Activated CD8-positive, alpha-beta T cell treated with anti-CD3 and anti-CD28 coated beads, Interleukin-2, amount 10 ng/mL, durations not matched to agents 7 days and 5 days (primary cell): ENCODE measurements at regions of chr17 and their contacts with region 1.

Region 1: DNA sequence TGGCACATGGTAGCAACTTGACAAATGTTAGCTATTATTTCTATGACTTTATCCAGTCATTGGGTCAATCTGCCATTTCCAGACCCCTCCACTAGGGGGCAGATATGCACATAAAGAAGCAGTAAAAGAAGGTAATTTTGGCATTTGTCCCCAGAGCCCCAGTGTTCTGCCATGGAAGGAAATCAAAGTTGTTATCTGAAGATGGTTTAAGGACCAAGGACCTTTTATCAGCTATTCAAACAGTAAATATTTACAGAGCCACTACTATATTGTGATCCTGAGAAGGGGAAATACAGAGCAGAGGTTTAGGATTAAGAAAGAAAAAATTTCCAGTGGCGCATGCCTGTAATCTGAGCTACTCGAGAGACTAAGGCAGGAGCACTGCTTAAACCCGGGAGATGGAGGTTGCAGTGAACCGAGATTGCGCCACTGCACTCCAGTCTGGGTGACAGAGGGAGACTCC is 20.0 kb downstream of the TRAF4 start:
- DNase-seq: peak; percentile 87
- ATAC-seq: peak; percentile 78
- H3K4me3 Mint-ChIP-seq: no peak overlapping the region
- H3K27ac Mint-ChIP-seq: no peak overlapping the region
- H3K4me1 Mint-ChIP-seq: peaks cover 16% of the 10 kb centered on the region
- H3K27me3 Mint-ChIP-seq: no peaks in the 10 kb centered on the region

Region 2: DNA sequence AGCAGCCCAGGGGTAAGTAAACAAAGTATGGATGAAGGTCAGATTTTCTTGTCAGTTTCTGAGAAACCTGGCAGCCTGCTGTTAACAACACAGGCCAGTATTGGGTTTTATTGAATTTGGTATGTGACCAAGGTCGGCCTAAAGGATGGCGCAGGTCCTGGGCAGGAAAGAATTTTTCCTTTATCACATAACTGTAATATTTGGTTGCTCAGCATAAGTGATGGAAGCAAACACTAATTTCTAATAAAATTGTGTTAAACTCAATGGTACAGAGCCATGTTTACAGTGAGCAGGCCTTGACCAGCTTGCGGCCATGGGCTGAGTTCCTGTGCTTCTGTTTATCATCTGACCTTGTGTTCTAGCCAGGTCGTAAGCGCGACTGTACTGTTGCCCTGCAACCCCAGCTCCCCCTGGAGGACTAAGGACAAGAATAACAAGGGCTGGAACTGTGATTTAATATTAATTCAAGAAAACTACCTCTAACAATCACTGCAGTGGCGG is 417.0 kb before region 1 on chr17:
- CTCF ChIA-PET with region 1: no interaction called
- POLR2A ChIA-PET with region 1: no interaction called
- DNase-seq: no peak
- ATAC-seq: no peak
- H3K4me3 Mint-ChIP-seq: no peak overlapping the region
- H3K27ac Mint-ChIP-seq: no peak overlapping the region
- H3K4me1 Mint-ChIP-seq: peaks cover 5% of the 10 kb centered on the region
- H3K27me3 Mint-ChIP-seq: no peaks in the 10 kb centered on the region

Region 3: DNA sequence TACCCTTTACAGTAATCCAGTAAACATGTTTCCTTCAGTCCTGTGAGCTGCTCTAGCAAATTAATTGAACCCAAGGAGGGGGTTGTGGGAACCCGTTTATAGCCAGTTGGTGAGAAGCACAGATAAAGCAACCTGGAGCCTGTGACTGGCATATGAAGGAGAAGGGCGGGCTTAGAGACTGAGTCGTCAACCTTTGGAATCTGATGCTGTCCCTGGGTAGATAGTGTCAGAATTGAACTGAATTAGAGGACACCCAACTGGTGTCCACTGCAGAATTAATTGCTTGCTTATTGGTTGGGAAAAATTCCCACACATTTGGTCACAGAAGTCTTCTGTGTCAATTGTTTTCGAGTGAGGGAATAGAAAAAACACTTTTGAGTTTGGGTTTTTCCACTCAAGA is 137.0 kb before region 1 on chr17:
- CTCF ChIA-PET with region 1: no interaction called
- POLR2A ChIA-PET with region 1: no interaction called
- DNase-seq: no peak
- ATAC-seq: no peak
- H3K4me3 Mint-ChIP-seq: no peak overlapping the region
- H3K27ac Mint-ChIP-seq: no peak overlapping the region
- H3K4me1 Mint-ChIP-seq: no peaks in the 10 kb centered on the region
- H3K27me3 Mint-ChIP-seq: no peaks in the 10 kb centered on the region

Region 4: DNA sequence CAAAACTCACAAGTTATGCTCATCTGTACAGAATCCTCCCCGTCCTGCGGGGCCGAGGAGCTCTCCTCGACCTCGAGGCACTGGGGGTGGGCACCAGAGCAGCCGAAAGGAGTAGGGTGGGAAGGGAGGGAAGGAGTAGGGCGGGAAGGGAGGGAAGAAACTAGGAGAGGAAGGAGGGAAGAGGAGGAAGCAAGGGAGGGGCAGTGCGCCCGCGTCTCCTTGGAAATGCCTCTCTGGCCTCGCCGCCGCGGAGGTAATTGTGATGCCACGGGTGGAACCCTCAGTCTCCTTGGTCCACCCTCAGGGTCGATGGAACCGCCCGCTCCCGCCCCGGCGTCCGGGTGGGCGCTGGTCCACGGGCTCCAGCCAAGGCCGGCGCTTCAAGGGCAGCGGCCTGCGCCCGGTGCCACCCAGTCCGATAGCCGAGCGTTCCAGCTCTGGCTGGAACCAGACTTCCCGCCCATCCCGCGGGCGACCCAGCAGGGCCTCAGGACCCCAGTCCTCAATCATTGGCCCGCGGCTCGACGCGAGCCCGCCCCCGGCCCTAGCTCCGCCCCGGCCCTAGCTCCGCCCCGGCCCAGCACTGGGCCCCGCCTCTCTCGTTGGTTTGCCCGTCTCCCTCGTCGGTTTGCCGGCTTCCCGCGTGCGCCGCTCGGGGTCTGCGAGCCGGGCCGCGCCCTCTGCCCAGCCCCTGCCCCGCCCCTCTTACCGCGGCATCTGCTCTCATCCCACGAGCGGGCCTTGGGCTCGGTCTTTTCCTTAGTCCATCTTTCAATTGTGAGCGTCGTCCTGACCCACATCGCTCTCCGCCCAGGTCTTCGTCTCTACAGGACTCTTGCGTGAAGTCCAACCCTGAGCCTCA is 52.7 kb before region 1 on chr17:
- CTCF ChIA-PET with region 1: interaction called, 13 read pairs
- POLR2A ChIA-PET with region 1: no interaction called
- DNase-seq: peak; percentile 91
- ATAC-seq: peak; percentile 91
- H3K4me3 Mint-ChIP-seq: peak overlapping the region; percentile 86
- H3K27ac Mint-ChIP-seq: peak overlapping the region; percentile 98
- H3K4me1 Mint-ChIP-seq: peaks cover 20% of the 10 kb centered on the region
- H3K27me3 Mint-ChIP-seq: peaks cover 9% of the 10 kb centered on the region

Region 5: GRCh38 chr17:28777178-28777577 is 13.3 kb after region 1 on chr17:
- CTCF ChIA-PET with region 1: interaction called, 83 read pairs
- POLR2A ChIA-PET with region 1: no interaction called
- DNase-seq: no peak
- ATAC-seq: no peak
- H3K4me3 Mint-ChIP-seq: no peak overlapping the region
- H3K27ac Mint-ChIP-seq: peak overlapping the region; percentile 34
- H3K4me1 Mint-ChIP-seq: peaks cover 28% of the 10 kb centered on the region
- H3K27me3 Mint-ChIP-seq: no peaks in the 10 kb centered on the region

Region 6: DNA sequence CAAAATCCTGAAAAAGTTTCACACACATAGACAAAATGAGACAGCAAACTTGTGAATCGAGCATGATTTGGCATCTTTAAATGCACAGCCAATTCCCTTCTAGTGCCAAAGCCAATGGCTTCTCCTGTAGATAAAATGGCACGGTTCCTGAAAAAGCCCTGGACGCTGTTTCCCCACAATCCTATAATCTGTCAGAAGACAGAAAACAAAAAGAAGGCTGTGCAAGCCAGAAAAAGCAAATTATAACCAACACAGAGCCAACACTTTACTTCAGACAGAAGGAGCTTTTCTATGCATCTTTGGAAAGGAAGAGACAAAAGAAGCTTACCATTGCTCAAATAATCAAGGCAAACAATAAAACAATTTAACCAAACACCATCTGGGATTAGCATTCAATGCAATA is 55.0 kb after region 1 on chr17:
- CTCF ChIA-PET with region 1: interaction called, 21 read pairs
- POLR2A ChIA-PET with region 1: no interaction called
- DNase-seq: no peak
- ATAC-seq: no peak
- H3K4me3 Mint-ChIP-seq: no peak overlapping the region
- H3K27ac Mint-ChIP-seq: no peak overlapping the region
- H3K4me1 Mint-ChIP-seq: peaks cover 12% of the 10 kb centered on the region
- H3K27me3 Mint-ChIP-seq: no peaks in the 10 kb centered on the region

Region 7: DNA sequence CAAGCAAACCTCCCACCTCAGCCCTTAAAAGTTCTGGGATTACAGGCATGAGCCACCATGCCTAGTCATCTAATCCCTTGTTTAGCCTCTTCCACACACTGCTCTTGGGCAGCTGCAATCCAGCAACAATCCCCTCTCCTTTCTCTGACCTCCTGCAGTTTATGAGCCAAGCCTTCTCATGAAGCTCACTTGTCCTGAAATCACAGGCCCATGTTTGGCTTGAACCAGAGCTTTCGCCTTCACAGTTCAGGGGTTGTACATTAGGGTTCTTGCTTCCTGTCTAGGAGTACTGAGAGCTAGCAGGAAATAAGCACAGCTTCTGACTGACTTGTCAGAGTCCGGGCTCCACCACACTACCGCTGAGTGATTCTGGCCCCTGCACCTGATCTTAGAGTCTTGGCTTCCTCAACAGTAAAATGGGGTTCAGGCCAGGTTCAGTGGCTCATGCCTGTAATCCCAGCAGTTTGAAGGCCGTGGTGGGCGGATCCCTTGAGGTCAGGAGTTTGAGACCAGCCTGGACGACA is 107.3 kb after region 1 on chr17:
- CTCF ChIA-PET with region 1: interaction called, 32 read pairs
- POLR2A ChIA-PET with region 1: interaction called, 4 read pairs
- DNase-seq: peak; percentile 76
- ATAC-seq: peak; percentile 99
- H3K4me3 Mint-ChIP-seq: no peak overlapping the region
- H3K27ac Mint-ChIP-seq: peak overlapping the region; percentile 97
- H3K4me1 Mint-ChIP-seq: peaks cover 16% of the 10 kb centered on the region
- H3K27me3 Mint-ChIP-seq: no peaks in the 10 kb centered on the region

Region 8: DNA sequence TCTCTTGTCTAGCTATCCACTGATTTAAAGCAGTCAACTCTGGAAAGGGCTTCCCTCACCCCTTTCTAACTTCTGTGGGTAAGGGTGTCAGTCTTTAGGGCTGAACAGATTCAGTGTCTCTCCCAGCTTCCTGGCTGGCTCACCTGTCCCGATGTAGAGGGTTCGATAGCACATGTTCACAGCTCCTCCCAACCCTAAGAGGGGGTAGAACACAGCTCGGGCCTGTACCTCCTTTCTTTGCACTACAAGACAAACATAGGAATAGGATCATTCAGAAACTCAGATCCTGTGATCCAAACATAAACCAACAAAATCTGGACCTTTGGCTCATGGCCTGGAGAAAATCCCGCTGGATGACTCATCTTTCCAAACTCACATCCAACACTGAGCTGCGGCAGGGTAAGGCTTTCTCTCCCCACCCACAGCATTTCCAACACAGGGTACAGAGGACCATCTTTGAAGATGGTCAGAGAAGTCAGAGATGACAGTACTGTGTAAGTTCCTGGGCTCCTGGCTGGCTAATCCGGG is 144.9 kb after region 1 on chr17:
- CTCF ChIA-PET with region 1: interaction called, 44 read pairs
- POLR2A ChIA-PET with region 1: no interaction called
- DNase-seq: no peak
- ATAC-seq: no peak
- H3K4me3 Mint-ChIP-seq: no peak overlapping the region
- H3K27ac Mint-ChIP-seq: no peak overlapping the region
- H3K4me1 Mint-ChIP-seq: no peaks in the 10 kb centered on the region
- H3K27me3 Mint-ChIP-seq: no peaks in the 10 kb centered on the region

Region 9: GRCh38 chr17:28951991-28952975 is 188.4 kb after region 1 on chr17:
- CTCF ChIA-PET with region 1: interaction called, 54 read pairs
- POLR2A ChIA-PET with region 1: no interaction called
- DNase-seq: peak; percentile 98
- ATAC-seq: peak; percentile 76
- H3K4me3 Mint-ChIP-seq: no peak overlapping the region
- H3K27ac Mint-ChIP-seq: no peak overlapping the region
- H3K4me1 Mint-ChIP-seq: peaks cover 15% of the 10 kb centered on the region
- H3K27me3 Mint-ChIP-seq: no peaks in the 10 kb centered on the region

Region 10: GRCh38 chr17:29020576-29020975 is 256.7 kb after region 1 on chr17:
- CTCF ChIA-PET with region 1: no interaction called
- POLR2A ChIA-PET with region 1: no interaction called
- DNase-seq: no peak
- ATAC-seq: no peak
- H3K4me3 Mint-ChIP-seq: no peak overlapping the region
- H3K27ac Mint-ChIP-seq: no peak overlapping the region
- H3K4me1 Mint-ChIP-seq: peaks cover 8% of the 10 kb centered on the region
- H3K27me3 Mint-ChIP-seq: peaks cover 38% of the 10 kb centered on the region